Heart right ventricle (tissue), 16 donors: ENCODE measurements at regions of chr11 and their contacts with region 1.

Region 1: GRCh38 chr11:67606492-67607201 is at the start of gene NDUFV1:
- DNase-seq: peak; percentile 97 to 98
- ATAC-seq: peak; percentile 97 to 100 (median 99)
- H3K4me3 ChIP-seq: peak within 1 kb of the TSS; percentile 85 to 100 (median 92)
- H3K27ac ChIP-seq: peak within 1 kb of the TSS; percentile 66 to 97 (median 92)
- H3K4me1 ChIP-seq: peaks cover 12 to 27% (median 20%) of the 10 kb centered on the region in 9 donors
- H3K27me3 ChIP-seq: peaks cover 0 to 2% (median 0%) of the 10 kb centered on the region in 7 donors
- CTCF ChIP-seq: peak; percentile 34 to 84 (median 70)
- total RNA-seq, gene NDUFV1: 406 to 712 (median 638) TPM

Region 2: DNA sequence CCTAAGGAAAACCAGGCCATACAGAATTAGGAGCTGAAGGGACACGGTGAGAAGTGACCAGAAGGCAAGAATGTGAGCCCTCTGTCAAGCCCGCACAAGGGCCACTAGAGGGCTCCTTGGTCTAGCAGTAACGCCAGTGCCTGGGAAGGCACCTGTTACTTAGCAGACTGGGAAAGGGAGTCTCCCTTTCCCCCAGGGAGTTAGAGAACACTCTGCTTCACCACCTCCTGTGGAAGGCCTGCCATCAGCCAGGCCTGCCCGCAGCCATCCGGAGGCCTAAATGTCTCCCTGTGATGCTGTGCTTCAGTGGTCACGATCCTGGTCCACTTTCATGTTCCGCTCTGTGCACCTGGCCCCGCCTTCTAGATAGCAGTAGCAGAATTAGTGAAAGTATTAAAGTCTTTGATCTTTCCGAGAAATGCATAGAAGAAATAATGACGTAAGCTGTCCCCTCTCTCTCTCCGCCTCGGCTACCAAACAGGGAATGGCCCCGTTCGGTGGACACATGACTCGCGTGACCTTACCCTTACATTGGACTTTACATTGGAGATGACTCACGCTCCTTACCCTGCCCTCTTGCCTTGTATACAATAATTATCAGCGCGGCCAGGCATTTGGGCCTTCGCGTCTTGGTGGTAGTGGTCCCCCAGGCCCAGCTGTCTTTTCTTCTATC is 33.8 kb before region 1 on chr11:
- intact Hi-C with region 1: loop called in 1 of 10 experiments (anchors 5 kb)
- DNase-seq: peak; percentile 34
- ATAC-seq: peak in 2 of 8 donors; percentile 33 to 52
- H3K4me3 ChIP-seq: no peak overlapping the region
- H3K27ac ChIP-seq: no peak overlapping the region
- H3K4me1 ChIP-seq: no peaks in the 10 kb centered on the region
- H3K27me3 ChIP-seq: peaks cover 0 to 24% (median 7%) of the 10 kb centered on the region in 7 donors
- CTCF ChIP-seq: peak; percentile 47 to 86 (median 76)

Region 3: GRCh38 chr11:67583247-67584204 is 23.1 kb before region 1 on chr11 and contains the start of gene GSTP1:
- intact Hi-C with region 1: loop called in 2 of 10 experiments (anchors 1 kb)
- DNase-seq: peak; percentile 92 to 95
- ATAC-seq: peak; percentile 97 to 98 (median 97)
- H3K4me3 ChIP-seq: peak within 1 kb of the TSS; percentile 51 to 92 (median 80)
- H3K27ac ChIP-seq: peak within 1 kb of the TSS; percentile 82 to 100 (median 97)
- H3K4me1 ChIP-seq: peaks cover 0 to 50% (median 16%) of the 10 kb centered on the region in 9 donors
- H3K27me3 ChIP-seq: peaks cover 0 to 8% (median 0%) of the 10 kb centered on the region in 7 donors
- CTCF ChIP-seq: peak; percentile 64 to 93 (median 83)
- total RNA-seq, gene GSTP1: 249 to 430 (median 303) TPM

Region 4: GRCh38 chr11:67617243-67617953 is 10.8 kb after region 1 on chr11:
- intact Hi-C with region 1: no loop called
- DNase-seq: no peak
- ATAC-seq: no peak
- H3K4me3 ChIP-seq: no peak overlapping the region
- H3K27ac ChIP-seq: peak overlapping the region in 1 of 10 donors; percentile 56
- H3K4me1 ChIP-seq: peaks cover 8 to 36% (median 18%) of the 10 kb centered on the region in 9 donors
- H3K27me3 ChIP-seq: peaks cover 0 to 17% (median 12%) of the 10 kb centered on the region in 7 donors
- CTCF ChIP-seq: no peak

Region 5: DNA sequence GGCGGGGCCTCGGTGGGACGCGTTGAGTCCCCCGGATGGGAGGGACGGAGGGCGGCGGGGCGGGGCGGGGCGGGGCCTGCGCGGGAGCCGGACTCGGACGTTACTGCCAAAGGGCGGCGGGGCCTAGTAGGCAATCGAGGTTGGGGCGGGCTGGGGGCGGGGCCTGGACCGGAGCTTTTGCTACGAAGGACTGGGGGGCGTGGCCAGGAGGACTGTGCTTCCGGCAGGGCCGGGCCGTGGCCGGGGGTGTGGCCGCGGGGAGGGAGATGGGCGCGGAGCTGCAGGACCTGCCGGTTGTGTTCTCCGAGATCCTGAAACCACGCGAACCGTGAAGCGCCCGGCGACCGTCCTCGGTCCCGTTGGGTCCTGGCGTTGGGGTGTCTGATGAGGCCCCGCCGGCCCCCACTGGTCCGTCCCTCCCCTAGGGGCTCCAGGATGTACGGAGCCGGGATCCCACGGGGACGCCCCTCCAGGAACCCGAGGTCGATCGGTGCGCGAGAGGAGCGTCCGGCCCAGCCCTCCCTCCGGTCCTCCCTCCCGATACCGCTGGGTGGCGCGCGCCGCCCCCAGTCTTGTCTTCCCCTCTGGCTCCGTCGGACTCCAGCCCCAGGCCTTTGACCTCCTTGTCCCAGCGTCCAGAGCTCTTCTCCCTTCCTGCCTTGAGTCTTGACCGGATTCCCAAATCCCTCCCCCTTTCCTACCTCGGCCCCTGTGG is 23.7 kb after region 1 on chr11:
- intact Hi-C with region 1: loop called in 1 of 10 experiments (anchors 2 kb)
- DNase-seq: peak; percentile 98 to 99
- ATAC-seq: peak; percentile 87 to 95 (median 92)
- H3K4me3 ChIP-seq: peak overlapping the region; percentile 16 to 80 (median 64)
- H3K27ac ChIP-seq: peak overlapping the region; percentile 16 to 98 (median 92)
- H3K4me1 ChIP-seq: peaks cover 0 to 30% (median 19%) of the 10 kb centered on the region in 9 donors
- H3K27me3 ChIP-seq: no peaks in the 10 kb centered on the region
- CTCF ChIP-seq: peak; percentile 21 to 85 (median 77)